ENCODE measurements at regions of chr10 and their contacts with region 1.

Region 1: GRCh38 chr10:5862360-5862961 is 27.2 kb downstream of the ANKRD16 start:
- DNase-seq: no peak
- ATAC-seq: no peak
- H3K4me3 Mint-ChIP-seq: no peak overlapping the region
- H3K27ac Mint-ChIP-seq: no peak overlapping the region
- H3K4me1 Mint-ChIP-seq: no peaks in the 10 kb centered on the region
- H3K27me3 Mint-ChIP-seq: no peaks in the 10 kb centered on the region

Region 2: DNA sequence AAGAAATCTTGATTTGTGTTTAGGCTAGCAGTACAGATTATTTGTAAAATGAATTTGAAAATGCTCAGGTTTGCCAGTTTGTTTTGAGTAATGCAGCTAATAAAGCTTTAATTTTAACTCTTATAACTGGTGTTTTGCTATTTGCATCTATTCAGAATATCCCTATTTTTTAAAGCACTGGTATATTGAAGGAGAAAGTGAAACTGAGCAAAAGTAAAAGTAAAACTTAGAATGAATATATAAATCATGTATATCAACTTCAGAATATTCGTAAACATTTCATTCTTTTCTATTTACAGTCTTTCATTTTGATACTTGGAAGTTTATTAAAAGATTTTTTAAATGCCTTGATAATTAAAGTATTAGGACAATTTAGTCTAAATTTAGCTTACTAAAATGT is 151.6 kb before region 1 on chr10:
- CTCF ChIA-PET with region 1: no interaction called
- POLR2A ChIA-PET with region 1: no interaction called
- DNase-seq: no peak
- ATAC-seq: peak; percentile 46
- H3K4me3 Mint-ChIP-seq: peak overlapping the region; percentile 69
- H3K27ac Mint-ChIP-seq: no peak overlapping the region
- H3K4me1 Mint-ChIP-seq: peaks cover 43% of the 10 kb centered on the region
- H3K27me3 Mint-ChIP-seq: no peaks in the 10 kb centered on the region

Region 3: DNA sequence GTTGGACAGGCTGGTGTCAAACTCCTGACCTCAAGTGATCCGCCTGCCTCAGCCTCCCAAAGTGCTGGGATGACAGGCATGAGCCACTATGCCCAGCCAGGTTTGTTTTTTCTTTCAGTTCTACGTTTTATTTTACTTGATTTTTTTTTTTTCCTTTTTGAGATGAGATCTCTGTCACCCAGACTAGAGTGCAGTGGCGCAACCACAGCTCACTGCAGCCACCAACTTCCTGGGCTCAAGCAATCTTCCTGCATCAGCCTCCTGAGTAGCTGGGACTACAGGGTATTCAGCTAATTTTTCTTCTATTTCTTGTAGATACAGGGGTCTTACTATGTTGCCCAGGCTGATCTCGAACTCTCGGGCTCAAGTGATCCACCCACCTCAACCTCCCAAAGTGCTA is 73.5 kb before region 1 on chr10:
- CTCF ChIA-PET with region 1: no interaction called
- POLR2A ChIA-PET with region 1: no interaction called
- DNase-seq: peak; percentile 47
- ATAC-seq: peak; percentile 66
- H3K4me3 Mint-ChIP-seq: peak overlapping the region; percentile 23
- H3K27ac Mint-ChIP-seq: peak overlapping the region; percentile 78
- H3K4me1 Mint-ChIP-seq: peaks cover 34% of the 10 kb centered on the region
- H3K27me3 Mint-ChIP-seq: no peaks in the 10 kb centered on the region

Region 4: GRCh38 chr10:5873515-5873995 is 11.1 kb after region 1 on chr10:
- CTCF ChIA-PET with region 1: interaction called, 18 read pairs
- POLR2A ChIA-PET with region 1: no interaction called
- DNase-seq: peak; percentile 78
- ATAC-seq: peak; percentile 94
- H3K4me3 Mint-ChIP-seq: peak overlapping the region; percentile 16
- H3K27ac Mint-ChIP-seq: no peak overlapping the region
- H3K4me1 Mint-ChIP-seq: peaks cover 6% of the 10 kb centered on the region
- H3K27me3 Mint-ChIP-seq: no peaks in the 10 kb centered on the region